Activated B cell treated with CpG ODN at 0.5 μM for 24 hours (primary cell): ENCODE measurements at regions of chr12 and their contacts with region 1.

Region 1: GRCh38 chr12:55738123-55739024 is 4.5 kb upstream of the GDF11 start:
- DNase-seq: peak; percentile 65
- ATAC-seq: peak; percentile 87
- H3K4me3 Mint-ChIP-seq: peak overlapping the region; percentile 92
- H3K27ac Mint-ChIP-seq: peak overlapping the region; percentile 91
- H3K4me1 Mint-ChIP-seq: peaks cover 27% of the 10 kb centered on the region
- H3K27me3 Mint-ChIP-seq: no peaks in the 10 kb centered on the region
- CTCF ChIP-seq: peak; percentile 73

Region 2: DNA sequence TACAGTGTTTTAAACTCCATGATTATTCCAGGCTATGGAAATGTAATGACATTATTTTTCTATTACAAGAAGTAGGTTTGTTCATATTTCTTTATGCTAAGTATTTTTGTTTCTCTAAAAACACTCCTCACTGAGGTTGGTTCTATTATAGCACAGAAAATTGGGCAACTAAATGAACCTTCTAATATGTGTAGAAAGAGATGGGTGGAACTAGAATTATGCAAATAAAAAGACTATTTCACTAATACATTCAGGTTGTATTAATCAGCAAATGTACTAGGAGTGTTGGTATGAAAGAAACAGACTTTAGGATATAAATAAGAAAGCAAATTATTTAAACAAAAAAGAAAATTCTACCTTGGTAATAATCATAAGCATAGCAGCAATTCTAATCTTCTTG is 289.5 kb before region 1 on chr12:
- CTCF ChIA-PET with region 1: no interaction called
- POLR2A ChIA-PET with region 1: no interaction called
- intact Hi-C with region 1: no loop called
- DNase-seq: no peak
- ATAC-seq: no peak
- H3K4me3 Mint-ChIP-seq: no peak overlapping the region
- H3K27ac Mint-ChIP-seq: no peak overlapping the region
- H3K4me1 Mint-ChIP-seq: peaks cover 1% of the 10 kb centered on the region
- H3K27me3 Mint-ChIP-seq: peaks cover 8% of the 10 kb centered on the region
- CTCF ChIP-seq: no peak

Region 3: GRCh38 chr12:55654511-55655214 is 83.7 kb before region 1 on chr12:
- CTCF ChIA-PET with region 1: interaction called, 16 read pairs
- POLR2A ChIA-PET with region 1: no interaction called
- intact Hi-C with region 1: no loop called
- DNase-seq: no peak
- ATAC-seq: no peak
- H3K4me3 Mint-ChIP-seq: no peak overlapping the region
- H3K27ac Mint-ChIP-seq: no peak overlapping the region
- H3K4me1 Mint-ChIP-seq: peaks cover 26% of the 10 kb centered on the region
- H3K27me3 Mint-ChIP-seq: no peaks in the 10 kb centered on the region
- CTCF ChIP-seq: no peak

Region 4: DNA sequence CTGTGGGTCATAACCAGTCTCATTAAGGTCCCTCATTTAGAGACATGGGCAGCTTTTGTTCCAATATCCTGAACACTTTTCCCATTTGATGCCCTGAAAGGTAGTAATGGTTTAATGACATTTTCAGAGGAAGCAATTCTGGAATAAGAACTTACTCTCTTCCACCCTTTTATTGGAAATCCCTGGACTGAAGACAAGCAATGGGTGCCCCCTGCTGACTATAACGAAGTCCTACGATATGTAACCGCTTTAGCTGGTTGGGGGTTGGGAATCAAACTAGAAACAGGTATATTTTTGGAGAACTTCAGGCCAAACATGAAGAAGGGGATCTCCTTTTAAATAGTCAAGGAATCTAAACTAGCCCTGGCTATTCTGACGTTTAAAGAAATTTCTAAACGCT is 58.7 kb after region 1 on chr12:
- CTCF ChIA-PET with region 1: interaction called, 30 read pairs
- POLR2A ChIA-PET with region 1: no interaction called
- intact Hi-C with region 1: loop called (anchors 1 kb)
- DNase-seq: no peak
- ATAC-seq: no peak
- H3K4me3 Mint-ChIP-seq: no peak overlapping the region
- H3K27ac Mint-ChIP-seq: no peak overlapping the region
- H3K4me1 Mint-ChIP-seq: peaks cover 1% of the 10 kb centered on the region
- H3K27me3 Mint-ChIP-seq: no peaks in the 10 kb centered on the region
- CTCF ChIP-seq: no peak

Region 5: DNA sequence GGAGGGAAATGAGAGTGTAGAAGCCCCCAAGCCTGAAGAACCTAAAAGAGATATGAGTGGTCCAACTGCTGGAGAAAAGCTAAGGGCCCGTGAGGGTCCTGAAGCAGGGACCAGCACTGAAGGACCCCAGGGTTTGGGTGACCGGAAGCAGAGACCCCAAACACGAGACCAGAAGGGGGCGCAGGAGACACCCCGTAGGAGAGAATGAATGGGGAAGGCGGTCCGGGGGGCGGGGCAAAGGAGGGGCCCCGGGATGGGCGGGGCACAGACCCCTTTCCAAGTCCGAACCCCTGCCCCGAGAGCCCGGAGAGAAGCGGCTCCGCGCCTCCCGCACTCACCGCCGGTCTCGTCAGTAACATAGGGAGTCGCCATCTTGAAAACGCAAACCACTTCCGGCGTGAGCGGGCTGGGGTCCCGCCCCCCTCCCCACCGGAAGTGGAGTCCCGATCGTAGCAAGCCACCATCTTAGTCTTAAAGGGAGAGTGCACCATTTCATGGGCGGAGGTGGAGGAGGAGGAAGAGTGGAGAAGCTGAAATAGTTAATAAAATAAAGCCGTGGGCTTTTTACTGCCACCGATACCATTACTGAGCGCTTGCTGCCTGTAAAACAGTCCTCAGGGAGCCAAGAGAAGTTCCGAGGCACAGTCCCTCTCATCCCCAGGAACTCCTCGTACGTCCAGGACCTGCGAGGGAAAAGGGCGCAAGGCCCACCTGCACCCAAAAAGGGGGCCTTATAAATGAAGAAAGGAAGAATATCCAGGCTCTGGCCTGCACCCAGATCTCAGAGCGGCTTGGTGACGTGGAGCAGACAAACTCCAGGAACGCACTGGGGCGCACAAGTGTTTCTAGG is 188.6 kb after region 1 on chr12:
- CTCF ChIA-PET with region 1: interaction called, 33 read pairs
- POLR2A ChIA-PET with region 1: interaction called, 10 read pairs
- intact Hi-C with region 1: loop called (anchors 1 kb)
- DNase-seq: peak; percentile 84
- ATAC-seq: peak; percentile 48
- H3K4me3 Mint-ChIP-seq: peak overlapping the region; percentile 98
- H3K27ac Mint-ChIP-seq: peak overlapping the region; percentile 98
- H3K4me1 Mint-ChIP-seq: peaks cover 67% of the 10 kb centered on the region
- H3K27me3 Mint-ChIP-seq: no peaks in the 10 kb centered on the region
- CTCF ChIP-seq: peak; percentile 50

Region 6: GRCh38 chr12:56029666-56030293 is 291.4 kb after region 1 on chr12:
- CTCF ChIA-PET with region 1: interaction called, 24 read pairs
- POLR2A ChIA-PET with region 1: no interaction called
- intact Hi-C with region 1: loop called (anchors 1 kb)
- DNase-seq: no peak
- ATAC-seq: peak; percentile 71
- H3K4me3 Mint-ChIP-seq: no peak overlapping the region
- H3K27ac Mint-ChIP-seq: no peak overlapping the region
- H3K4me1 Mint-ChIP-seq: no peaks in the 10 kb centered on the region
- H3K27me3 Mint-ChIP-seq: no peaks in the 10 kb centered on the region
- CTCF ChIP-seq: no peak

Region 7: DNA sequence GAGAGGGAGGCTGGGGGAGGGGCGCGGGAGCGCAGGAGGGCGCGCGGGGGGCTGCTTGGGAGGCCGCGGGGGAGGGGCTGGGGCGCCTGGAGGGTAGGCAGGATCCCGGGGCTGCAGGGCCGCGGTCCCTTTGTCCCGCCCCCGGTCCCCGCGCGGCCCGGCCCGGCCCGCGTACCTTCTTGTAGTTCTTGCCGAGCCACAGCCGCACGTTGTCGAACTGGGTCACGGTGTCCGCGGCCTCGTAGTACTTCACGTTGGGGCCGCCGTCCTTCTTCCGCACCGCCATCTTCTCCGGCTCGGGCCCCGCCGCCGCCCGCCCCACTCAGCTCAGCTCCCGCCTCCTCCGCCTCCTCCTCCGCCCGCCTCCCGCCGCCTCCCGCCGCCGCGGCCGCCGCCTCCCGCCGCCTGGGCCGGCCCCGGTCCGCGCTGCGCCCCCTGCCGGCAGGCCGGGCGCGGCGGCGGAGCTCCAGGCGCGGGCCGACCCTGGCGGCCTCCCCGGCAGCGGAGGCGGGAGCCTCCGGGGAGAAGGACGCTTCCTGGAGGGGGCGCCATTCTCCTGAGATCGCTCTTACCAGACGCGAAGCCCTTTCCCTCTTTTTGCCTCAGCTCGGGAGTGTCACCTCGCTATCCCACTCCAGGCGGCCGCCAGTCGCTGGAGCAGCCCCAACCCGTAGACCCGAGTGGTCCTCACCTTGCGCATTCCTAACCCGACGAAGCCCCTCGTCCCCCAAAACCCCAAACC is 451.0 kb after region 1 on chr12 and contains the start of gene SMARCC2:
- CTCF ChIA-PET with region 1: interaction called, 9 read pairs
- POLR2A ChIA-PET with region 1: interaction called, 18 read pairs
- intact Hi-C with region 1: loop called (anchors 1 kb)
- DNase-seq: peak; percentile 82
- ATAC-seq: peak; percentile 81
- H3K4me3 Mint-ChIP-seq: peak within 1 kb of the TSS; percentile 95
- H3K27ac Mint-ChIP-seq: peak within 1 kb of the TSS; percentile 96
- H3K4me1 Mint-ChIP-seq: peaks cover 43% of the 10 kb centered on the region
- H3K27me3 Mint-ChIP-seq: no peaks in the 10 kb centered on the region
- CTCF ChIP-seq: no peak
- total RNA-seq, gene SMARCC2: 109 and 136 TPM in 2 replicates